ENCODE measurements at regions of chr5 and their contacts with region 1.

Region 1: GRCh38 chr5:139872052-139872766 is 76.6 kb downstream of the PSD2 start:
- DNase-seq: no peak
- H3K4me3 ChIP-seq: no peak overlapping the region
- H3K27ac ChIP-seq: no peak overlapping the region
- H3K4me1 ChIP-seq: peaks cover 0 to 9% (median 5%) of the 10 kb centered on the region in 4 experiments; a peak in 6 of 7 replicates
- H3K27me3 ChIP-seq: peaks cover 0 to 2% (median 0%) of the 10 kb centered on the region in 4 experiments; a peak in 2 of 7 replicates
- CTCF ChIP-seq: peak; percentile 64 to 73 (median 67)
- EP300 ChIP-seq: no peak
- POLR2A ChIP-seq: no peak
- RAD21 ChIP-seq: peak; percentile 51 to 64

Region 2: DNA sequence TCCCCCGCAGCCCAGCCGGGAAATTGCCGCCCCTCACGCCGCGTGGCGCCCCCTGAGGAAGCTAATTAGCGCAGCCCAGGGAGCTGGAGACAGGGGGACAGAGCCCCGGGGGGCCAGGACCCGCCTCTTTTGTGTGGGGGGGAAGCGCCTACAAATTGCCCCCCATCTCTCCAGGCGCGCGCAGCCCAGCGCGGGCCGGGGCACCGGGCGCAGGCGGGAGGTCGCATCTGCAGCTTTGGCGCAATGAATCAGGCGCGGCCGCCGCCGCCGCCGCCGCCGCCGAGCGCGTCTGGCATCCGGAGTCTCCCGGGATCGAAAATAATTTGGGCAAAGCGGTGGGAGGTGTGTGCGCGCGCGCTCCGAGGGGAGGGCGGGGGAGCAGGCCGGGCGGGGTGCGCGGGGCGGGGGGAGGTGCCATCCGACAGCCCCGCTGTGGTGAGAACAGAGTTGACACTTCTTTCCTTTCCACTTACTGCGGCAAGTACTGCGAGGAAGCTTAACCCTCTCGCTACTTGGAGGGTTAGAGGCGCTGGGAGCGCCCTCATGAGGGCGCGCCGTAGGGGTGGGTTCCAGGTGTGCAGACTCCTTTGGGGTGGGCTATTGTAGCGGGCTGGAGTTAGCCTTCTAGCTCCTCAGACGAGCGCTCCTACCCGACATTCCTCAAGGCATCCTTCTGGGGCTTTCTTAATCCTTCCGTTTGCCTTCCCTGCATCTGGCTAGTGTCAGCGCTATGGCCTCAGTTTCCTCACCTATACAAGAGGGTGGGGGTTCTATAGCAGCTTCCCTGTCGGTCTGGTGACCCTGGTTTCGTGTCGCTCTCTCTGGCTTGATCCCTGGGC is 160.9 kb before region 1 on chr5:
- CTCF ChIA-PET with region 1: no interaction called
- POLR2A ChIA-PET with region 1: no interaction called
- DNase-seq: peak in 1 of 2 experiments; percentile 82
- H3K4me3 ChIP-seq: peak overlapping the region; percentile 40 to 79 (median 54)
- H3K27ac ChIP-seq: 0 out of 2 replicates have a peak overlapping the region, but pooled peaks have one; percentile 14
- H3K4me1 ChIP-seq: peaks cover 13 to 34% (median 24%) of the 10 kb centered on the region in 4 experiments
- H3K27me3 ChIP-seq: peaks cover 0 to 11% (median 9%) of the 10 kb centered on the region in 4 experiments; a peak in 4 of 7 replicates
- CTCF ChIP-seq: peak in 2 of 3 experiments; percentile 35 to 36; a peak in 3 of 4 replicates
- EP300 ChIP-seq: 0 out of 3 replicates have a peak, but pooled peaks of 1 of the 2 experiments have one; percentile 29
- POLR2A ChIP-seq: peak in 1 of 2 experiments; percentile 40; a peak in 1 of 3 replicates
- RAD21 ChIP-seq: peak; percentile 28 to 61; a peak in 3 of 4 replicates

Region 3: DNA sequence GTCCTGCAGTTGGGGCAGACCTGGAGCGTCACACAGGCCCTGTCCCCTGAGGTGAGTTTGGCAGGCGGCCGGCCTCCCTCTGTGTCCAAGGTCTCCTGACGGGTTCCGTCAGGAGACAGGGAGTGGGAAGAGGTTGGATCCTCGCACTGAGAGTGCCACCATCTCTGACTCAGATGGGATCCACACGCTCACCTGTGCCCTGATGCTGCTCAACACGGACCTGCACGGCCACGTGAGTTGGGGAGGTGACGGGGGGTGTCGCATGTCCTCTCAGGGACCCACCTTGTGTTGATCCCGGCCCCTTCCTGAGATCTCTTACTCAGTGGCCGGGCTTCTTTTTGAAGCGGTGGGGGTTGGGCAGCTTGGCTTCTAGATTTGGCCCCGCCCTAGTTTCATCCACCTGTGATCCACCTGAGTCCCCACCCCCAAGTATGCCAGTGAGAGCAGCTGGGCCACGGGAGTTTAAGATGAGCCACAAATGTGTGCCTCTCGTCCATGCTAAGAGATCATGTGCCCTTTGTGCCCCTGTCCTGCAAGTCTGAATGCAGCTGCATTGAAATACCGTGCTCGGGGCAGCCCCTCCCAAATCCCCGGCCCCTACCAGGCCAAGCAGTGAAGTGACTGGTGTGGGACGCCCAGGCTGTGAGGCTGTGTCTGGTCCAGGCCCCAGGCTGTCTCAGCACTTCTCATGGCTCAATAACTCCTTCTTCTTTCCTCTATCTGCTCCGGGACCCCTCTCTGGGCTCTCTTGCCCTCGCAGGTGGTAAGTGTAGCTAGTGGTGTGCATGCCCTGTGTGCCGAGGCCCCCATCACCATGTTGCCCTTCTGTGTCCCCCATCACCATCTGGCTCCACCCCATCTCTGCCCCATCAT is 49.4 kb before region 1 on chr5:
- CTCF ChIA-PET with region 1: no interaction called
- POLR2A ChIA-PET with region 1: no interaction called
- DNase-seq: no peak
- H3K4me3 ChIP-seq: no peak overlapping the region
- H3K27ac ChIP-seq: no peak overlapping the region
- H3K4me1 ChIP-seq: peaks cover 0 to 7% (median under 1%) of the 10 kb centered on the region in 4 experiments; a peak in 6 of 7 replicates
- H3K27me3 ChIP-seq: no peaks in the 10 kb centered on the region
- CTCF ChIP-seq: no peak
- EP300 ChIP-seq: no peak
- POLR2A ChIP-seq: no peak
- RAD21 ChIP-seq: no peak

Region 4: GRCh38 chr5:139882961-139883539 is 10.8 kb after region 1 on chr5:
- CTCF ChIA-PET with region 1: interaction called, 31 read pairs
- POLR2A ChIA-PET with region 1: no interaction called
- DNase-seq: no peak
- H3K4me3 ChIP-seq: no peak overlapping the region
- H3K27ac ChIP-seq: no peak overlapping the region
- H3K4me1 ChIP-seq: peaks cover 0 to 9% (median 0%) of the 10 kb centered on the region in 4 experiments; a peak in 3 of 7 replicates
- H3K27me3 ChIP-seq: peaks cover 0 to 2% (median 0%) of the 10 kb centered on the region in 4 experiments; a peak in 2 of 7 replicates
- CTCF ChIP-seq: no peak
- EP300 ChIP-seq: no peak
- POLR2A ChIP-seq: no peak
- RAD21 ChIP-seq: no peak

Region 5: DNA sequence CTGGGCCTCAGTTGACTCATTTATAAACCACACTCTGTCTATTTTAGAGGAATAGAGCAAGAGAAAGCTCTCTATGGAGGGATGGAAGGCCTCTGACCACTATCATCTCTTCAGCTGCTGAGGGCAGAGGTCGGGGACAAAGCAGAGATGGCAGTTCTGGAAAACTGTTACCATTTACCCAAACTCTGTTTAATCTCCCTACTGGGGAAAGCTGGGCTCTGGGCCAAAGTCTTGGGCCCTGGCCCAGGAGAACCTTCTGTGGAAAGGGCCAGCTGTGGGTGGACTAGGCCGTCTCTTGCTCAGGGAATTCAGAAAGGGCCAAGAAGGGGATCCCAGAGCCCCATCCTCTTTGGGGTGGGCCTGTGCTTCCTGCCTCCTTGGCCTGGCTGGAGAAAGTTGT is 23.4 kb after region 1 on chr5:
- CTCF ChIA-PET with region 1: interaction called, 16 read pairs
- POLR2A ChIA-PET with region 1: no interaction called
- DNase-seq: no peak
- H3K4me3 ChIP-seq: no peak overlapping the region
- H3K27ac ChIP-seq: no peak overlapping the region
- H3K4me1 ChIP-seq: no peaks in the 10 kb centered on the region
- H3K27me3 ChIP-seq: peaks cover 4 to 27% (median 17%) of the 10 kb centered on the region in 4 experiments
- CTCF ChIP-seq: no peak
- EP300 ChIP-seq: no peak
- POLR2A ChIP-seq: no peak
- RAD21 ChIP-seq: no peak

Region 6: DNA sequence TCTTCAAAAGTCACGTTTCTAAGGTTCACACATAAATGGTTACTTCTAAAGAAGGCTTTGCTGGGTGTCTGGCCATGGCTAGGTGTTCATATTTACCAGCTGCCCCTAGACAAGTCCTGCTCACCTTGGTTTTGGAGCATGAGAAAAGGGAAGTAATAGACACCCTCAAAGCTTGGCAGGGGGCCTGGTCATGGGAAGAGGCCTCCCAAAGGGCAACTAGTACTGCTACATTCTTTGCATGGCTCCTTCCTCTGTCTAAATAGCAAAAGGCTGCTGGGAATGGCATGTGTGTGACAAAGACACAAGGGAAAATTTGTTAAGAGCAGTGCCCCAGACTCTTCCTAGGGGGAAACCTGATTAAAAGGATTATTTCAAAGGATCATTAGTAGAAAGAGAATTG is 77.5 kb after region 1 on chr5:
- CTCF ChIA-PET with region 1: interaction called, 14 read pairs
- POLR2A ChIA-PET with region 1: no interaction called
- DNase-seq: peak in 1 of 2 experiments; percentile 40
- H3K4me3 ChIP-seq: no peak overlapping the region
- H3K27ac ChIP-seq: no peak overlapping the region
- H3K4me1 ChIP-seq: peaks cover 0 to 5% (median 2%) of the 10 kb centered on the region in 4 experiments; a peak in 2 of 7 replicates
- H3K27me3 ChIP-seq: no peaks in the 10 kb centered on the region; a peak in 1 of 7 replicates
- CTCF ChIP-seq: no peak
- EP300 ChIP-seq: no peak
- POLR2A ChIP-seq: no peak
- RAD21 ChIP-seq: no peak